ENCODE measurements at regions of chr2 and their contacts with region 1.

Region 1: DNA sequence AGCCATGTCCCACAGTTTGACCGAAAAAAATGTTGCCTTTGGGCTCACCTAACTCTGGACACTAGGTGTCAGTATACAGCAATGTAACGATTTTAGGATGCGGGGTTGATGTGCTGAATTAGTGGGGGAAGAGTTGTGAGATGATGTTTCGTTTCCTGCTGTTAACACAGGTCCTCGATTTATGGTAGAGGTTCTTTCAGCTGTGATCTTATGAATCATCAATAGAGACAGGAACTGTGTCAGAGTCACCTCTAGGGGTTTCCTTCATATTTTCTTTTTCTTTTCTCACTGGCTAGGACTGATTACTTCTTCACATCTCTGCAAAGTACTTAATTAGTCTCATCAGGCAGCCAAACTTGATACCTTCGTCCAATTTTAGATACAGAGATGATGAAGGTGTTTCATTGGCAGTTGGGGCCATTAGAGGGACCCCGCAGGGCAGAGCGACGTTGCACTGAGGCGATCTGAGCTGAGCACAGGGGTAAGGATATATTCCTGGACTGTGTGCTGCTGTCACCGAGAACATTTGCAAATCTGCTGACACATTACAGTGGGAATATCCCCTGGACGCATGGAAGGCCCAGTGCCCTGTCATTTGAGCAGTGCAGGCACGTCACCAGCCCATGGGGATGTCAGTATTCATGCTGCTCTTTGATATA is 10.2 kb upstream of the MMADHC start:
- DNase-seq: peak in 4 of 5 donors; percentile 34 to 70 (median 68)
- H3K4me3 ChIP-seq: no peak overlapping the region
- H3K4me3 Mint-ChIP-seq: peak overlapping the region in 5 of 7 donors; percentile 1 to 57 (median 52)
- H3K27ac ChIP-seq: no peak overlapping the region
- H3K27ac Mint-ChIP-seq: peak overlapping the region in 6 of 8 donors; percentile 33 to 73 (median 44)
- H3K4me1 ChIP-seq: peaks cover 3% of the 10 kb centered on the region
- H3K4me1 Mint-ChIP-seq: peaks cover 13 to 18% (median 16%) of the 10 kb centered on the region in 3 donors
- H3K27me3 ChIP-seq: no peaks in the 10 kb centered on the region
- H3K27me3 Mint-ChIP-seq: peaks cover 0 to 36% of the 10 kb centered on the region in 2 donors

Region 2: GRCh38 chr2:149236410-149236809 is 361.4 kb before region 1 on chr2:
- CTCF ChIA-PET with region 1: no interaction called
- POLR2A ChIA-PET with region 1: no interaction called
- DNase-seq: no peak
- H3K4me3 ChIP-seq: no peak overlapping the region
- H3K4me3 Mint-ChIP-seq: no peak overlapping the region
- H3K27ac ChIP-seq: no peak overlapping the region
- H3K27ac Mint-ChIP-seq: no peak overlapping the region
- H3K4me1 ChIP-seq: no peaks in the 10 kb centered on the region
- H3K4me1 Mint-ChIP-seq: no peaks in the 10 kb centered on the region
- H3K27me3 ChIP-seq: no peaks in the 10 kb centered on the region
- H3K27me3 Mint-ChIP-seq: peaks cover 2 to 4% of the 10 kb centered on the region in 2 donors

Region 3: DNA sequence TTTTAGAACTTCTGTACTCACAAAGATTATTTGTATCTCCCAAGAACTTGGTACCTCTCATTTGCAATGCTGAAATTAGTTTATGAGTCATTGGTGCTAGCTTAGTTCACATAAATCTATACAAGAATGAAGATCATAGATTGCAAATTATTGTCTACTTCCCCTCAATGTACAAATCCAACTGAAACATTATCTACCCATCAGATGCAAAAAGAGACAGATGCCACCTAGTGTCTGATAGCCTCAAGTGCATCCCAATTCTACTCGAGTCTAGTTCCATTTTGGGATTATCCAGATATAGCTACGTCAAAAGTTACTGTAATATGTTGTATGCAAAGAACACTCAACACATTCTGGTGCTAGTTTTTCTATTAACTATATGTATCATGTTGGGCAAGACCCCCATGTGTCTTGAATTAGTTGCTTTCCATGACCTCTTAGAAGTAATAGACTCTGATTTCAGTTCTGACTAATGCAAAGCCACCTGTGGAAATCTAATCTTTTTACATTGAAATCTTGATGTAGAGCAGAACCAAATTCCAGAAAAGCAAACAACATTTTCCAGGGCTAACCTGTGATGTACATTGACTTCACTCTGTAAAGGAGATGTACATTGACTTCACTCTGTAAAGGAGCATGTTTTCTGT is 1453.9 kb after region 1 on chr2:
- CTCF ChIA-PET with region 1: interaction called, 35 read pairs
- POLR2A ChIA-PET with region 1: no interaction called
- DNase-seq: peak in 2 of 5 donors; percentile 6 to 25
- H3K4me3 ChIP-seq: no peak overlapping the region
- H3K4me3 Mint-ChIP-seq: no peak overlapping the region
- H3K27ac ChIP-seq: no peak overlapping the region
- H3K27ac Mint-ChIP-seq: no peak overlapping the region
- H3K4me1 ChIP-seq: no peaks in the 10 kb centered on the region
- H3K4me1 Mint-ChIP-seq: peaks cover 0 to 3% (median 0%) of the 10 kb centered on the region in 3 donors
- H3K27me3 ChIP-seq: no peaks in the 10 kb centered on the region
- H3K27me3 Mint-ChIP-seq: peaks cover 0 to 17% of the 10 kb centered on the region in 2 donors

Region 4: DNA sequence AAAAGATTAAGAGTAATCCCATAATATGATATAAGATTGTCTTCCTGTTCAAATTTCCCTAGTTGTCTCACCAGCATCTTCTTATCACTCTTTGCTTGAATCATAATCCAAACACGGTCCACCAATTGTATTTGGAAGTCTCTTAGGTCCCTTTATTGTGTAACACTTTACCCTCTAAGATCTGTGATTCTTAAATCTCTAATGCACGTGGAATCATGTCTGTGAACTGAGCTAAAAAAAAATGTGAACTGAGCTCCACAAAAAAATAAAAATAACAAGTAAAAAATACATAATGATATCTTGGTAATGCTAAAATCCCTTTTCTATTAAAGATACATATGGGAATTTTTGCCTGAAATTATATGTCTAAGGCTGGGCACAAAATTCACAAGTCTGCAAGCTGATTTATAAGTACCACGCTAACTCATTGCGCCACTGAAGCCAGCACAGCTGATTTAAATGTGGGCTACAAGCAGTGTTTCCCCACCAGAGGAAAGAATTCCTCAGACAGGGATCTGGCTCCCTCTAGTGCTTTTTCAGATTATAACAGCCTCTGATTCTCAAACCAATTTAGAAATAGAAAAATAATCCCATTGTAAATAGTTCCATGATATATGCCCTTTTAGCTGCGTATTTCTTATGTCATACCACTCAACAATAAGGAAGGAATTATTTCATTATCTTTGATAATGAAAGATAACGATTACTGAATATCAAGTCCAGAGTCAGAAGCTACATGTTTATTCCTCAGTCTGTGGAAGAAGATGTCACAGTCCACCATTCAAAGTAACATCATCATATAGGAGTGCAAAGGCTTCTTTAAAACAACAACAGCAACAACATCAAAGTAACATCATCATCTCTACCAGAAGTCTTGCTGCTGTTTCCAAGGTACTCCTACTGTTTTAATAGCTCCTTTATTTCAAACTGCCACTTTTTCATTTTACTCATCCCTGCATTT is 1641.0 kb after region 1 on chr2:
- CTCF ChIA-PET with region 1: interaction called, 24 read pairs
- POLR2A ChIA-PET with region 1: no interaction called
- DNase-seq: peak in 4 of 5 donors; percentile 9 to 49 (median 36)
- H3K4me3 ChIP-seq: no peak overlapping the region
- H3K4me3 Mint-ChIP-seq: no peak overlapping the region
- H3K27ac ChIP-seq: no peak overlapping the region
- H3K27ac Mint-ChIP-seq: peak overlapping the region in 1 of 8 donors; percentile 24
- H3K4me1 ChIP-seq: no peaks in the 10 kb centered on the region
- H3K4me1 Mint-ChIP-seq: no peaks in the 10 kb centered on the region
- H3K27me3 ChIP-seq: no peaks in the 10 kb centered on the region
- H3K27me3 Mint-ChIP-seq: peaks cover 3 to 5% of the 10 kb centered on the region in 2 donors

Measured in CD8-positive, alpha-beta memory T cell (primary cell).